H1 (cell line): ENCODE measurements at regions of chr18 and their contacts with region 1.

Region 1: DNA sequence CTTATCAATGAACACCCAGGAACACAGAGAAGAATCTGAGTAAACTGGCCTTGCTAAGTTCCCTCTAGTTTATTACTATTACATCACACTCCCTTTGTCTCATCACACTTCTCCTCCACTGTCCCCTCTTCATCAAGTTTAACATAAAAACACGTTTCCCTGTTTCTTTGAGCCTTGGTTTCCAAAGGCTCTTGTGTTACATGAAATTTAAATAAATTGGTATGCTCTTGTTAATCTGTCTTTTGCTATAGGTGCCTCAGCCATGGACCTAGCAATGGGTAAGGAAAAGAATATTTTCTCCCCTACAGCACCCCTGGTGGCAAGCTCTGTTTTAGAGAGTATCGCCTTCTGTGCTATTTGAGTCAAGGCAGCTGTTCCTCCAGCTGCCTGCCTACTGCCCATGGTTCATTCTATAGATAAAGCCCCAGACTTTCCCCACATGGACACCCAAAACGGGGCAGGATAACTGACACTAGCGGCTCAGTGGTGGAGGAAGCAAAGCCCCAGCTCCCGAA is 31.8 kb downstream of the TGIF1 start:
- DNase-seq: peak in 1 of 2 experiments; percentile 61
- H3K4me3 ChIP-seq: no peak overlapping the region
- H3K27ac ChIP-seq: no peak overlapping the region
- H3K4me1 ChIP-seq: peaks cover 0 to 7% (median 3%) of the 10 kb centered on the region in 4 experiments; a peak in 4 of 7 replicates
- H3K27me3 ChIP-seq: no peaks in the 10 kb centered on the region
- CTCF ChIP-seq: peak in 2 of 3 experiments; percentile 65 to 78; a peak in 3 of 4 replicates
- EP300 ChIP-seq: no peak
- POLR2A ChIP-seq: no peak
- RAD21 ChIP-seq: peak; percentile 50 to 69

Region 2: GRCh38 chr18:3466045-3466444 is 15.7 kb before region 1 on chr18:
- CTCF ChIA-PET with region 1: interaction called, 11 read pairs
- POLR2A ChIA-PET with region 1: interaction called, 9 read pairs
- DNase-seq: no peak
- H3K4me3 ChIP-seq: no peak overlapping the region
- H3K27ac ChIP-seq: no peak overlapping the region
- H3K4me1 ChIP-seq: peaks cover 7 to 19% (median 9%) of the 10 kb centered on the region in 4 experiments; a peak in 6 of 7 replicates
- H3K27me3 ChIP-seq: no peaks in the 10 kb centered on the region
- CTCF ChIP-seq: no peak
- EP300 ChIP-seq: no peak
- POLR2A ChIP-seq: no peak
- RAD21 ChIP-seq: no peak

Region 3: DNA sequence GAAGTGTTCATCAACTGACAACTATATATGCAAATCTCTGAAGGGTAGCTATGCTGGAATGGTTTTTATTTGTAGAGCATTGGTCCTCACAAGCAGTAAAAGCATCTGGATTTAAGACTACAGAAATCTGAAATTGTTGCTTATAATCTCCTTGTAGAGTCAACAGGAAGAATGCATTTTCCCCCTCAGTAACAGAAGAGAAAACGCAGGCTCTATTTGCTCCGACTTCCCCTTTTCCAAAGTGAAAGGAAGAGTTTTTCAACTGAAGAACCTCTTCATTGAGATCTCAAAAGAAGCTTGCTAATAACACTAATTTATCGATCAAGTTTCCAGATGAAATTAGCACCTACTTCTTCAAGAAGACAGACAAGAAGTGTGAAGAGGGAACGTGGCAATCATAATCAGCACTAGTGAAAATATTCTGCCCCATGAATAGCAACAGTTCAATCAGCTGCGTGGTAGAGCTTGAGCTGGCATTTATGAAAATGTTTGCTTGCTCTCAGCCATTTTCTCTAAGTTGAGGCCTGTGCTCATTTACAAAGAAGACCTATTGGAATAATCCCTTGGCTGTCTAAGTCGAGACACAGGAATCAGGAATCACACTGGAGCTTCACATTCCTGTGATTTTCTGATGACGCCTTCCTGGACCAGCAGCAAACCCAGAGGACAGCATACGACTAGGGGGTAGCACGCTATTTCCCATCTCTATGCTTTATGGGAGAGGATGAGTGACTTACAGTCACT is 11.9 kb after region 1 on chr18:
- CTCF ChIA-PET with region 1: interaction called, 12 read pairs
- POLR2A ChIA-PET with region 1: interaction called, 5 read pairs
- DNase-seq: no peak
- H3K4me3 ChIP-seq: no peak overlapping the region
- H3K27ac ChIP-seq: no peak overlapping the region
- H3K4me1 ChIP-seq: peaks cover 0 to 8% (median 4%) of the 10 kb centered on the region in 4 experiments; a peak in 4 of 7 replicates
- H3K27me3 ChIP-seq: no peaks in the 10 kb centered on the region; a peak in 4 of 7 replicates
- CTCF ChIP-seq: no peak
- EP300 ChIP-seq: no peak
- POLR2A ChIP-seq: no peak
- RAD21 ChIP-seq: no peak